ENCODE measurements at regions of chr12 and their contacts with region 1.

Region 1: DNA sequence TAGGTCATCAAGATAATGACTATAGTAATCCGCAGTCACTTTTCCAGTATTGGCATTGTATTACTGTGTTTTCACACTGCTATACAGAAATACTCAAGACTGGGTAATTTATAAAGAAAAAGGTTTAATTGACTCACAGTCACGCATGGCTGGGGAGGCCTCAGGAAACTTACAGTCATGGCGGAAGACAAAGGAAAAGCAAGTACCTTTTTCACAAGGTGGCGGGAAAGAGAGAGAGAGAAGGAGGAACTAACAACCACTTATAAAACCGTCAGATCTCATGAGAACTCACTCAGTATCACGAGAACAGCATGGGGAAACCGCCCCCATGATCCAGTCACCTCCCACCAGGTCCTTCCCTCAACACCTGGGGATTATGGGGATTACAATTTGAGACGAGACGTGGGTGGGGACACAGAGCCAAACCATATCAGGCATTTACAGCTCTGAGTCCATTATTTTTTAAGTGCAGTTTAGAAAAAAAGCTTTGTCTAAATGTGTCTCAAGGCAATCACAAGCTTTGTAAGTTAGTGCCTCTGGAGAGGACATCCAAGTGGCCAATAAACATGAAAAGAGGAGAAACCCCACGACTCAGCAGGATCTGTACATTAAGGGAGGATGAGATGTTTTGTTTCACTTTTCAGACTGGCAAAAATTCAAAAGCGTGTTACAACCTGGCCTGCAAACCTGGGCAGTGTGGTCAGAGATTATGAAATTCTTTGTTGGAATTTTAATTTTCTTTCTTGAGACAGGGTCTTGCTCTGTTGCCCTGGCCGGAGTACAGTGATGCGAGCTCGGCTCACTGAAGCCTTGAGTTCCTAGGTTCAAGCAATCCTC is 82.0 kb downstream of the DNAH10 start:
- DNase-seq: no peak
- ATAC-seq: no peak
- H3K4me3 Mint-ChIP-seq: no peak overlapping the region
- H3K27ac Mint-ChIP-seq: no peak overlapping the region
- H3K4me1 Mint-ChIP-seq: no peaks in the 10 kb centered on the region
- H3K27me3 Mint-ChIP-seq: peaks cover 2% of the 10 kb centered on the region

Region 2: DNA sequence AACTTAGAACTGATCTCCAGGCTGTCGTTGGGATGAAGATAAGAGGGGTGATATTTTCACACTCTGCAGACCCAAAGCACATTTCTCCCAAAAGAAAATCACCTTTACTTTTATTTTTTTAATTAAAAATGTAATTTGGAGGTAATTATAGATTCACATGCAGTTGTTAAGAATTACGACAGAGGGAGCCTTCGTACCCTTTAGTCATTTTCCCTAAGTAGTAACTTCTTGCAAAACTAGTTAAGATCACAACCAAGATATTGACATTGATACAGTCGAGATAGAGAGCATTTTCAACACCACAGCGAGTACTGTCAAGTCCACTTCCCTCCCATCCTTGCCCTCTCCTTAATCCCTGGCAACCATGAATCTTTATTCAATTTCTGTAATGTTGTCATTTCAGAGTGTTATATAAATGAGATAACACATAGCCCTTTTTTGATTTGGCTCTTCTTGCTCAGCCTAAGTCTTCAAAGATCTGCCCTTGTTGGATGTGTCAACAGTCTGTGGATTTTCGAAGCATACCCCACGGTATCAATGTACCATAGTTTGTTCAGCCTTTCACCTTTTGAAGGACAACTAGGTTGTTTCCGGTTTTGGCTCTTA is 42.5 kb before region 1 on chr12:
- CTCF ChIA-PET with region 1: interaction called, 5 read pairs
- POLR2A ChIA-PET with region 1: interaction called, 3 read pairs
- intact Hi-C with region 1: loop called (anchors 1 kb)
- DNase-seq: no peak
- ATAC-seq: no peak
- H3K4me3 Mint-ChIP-seq: no peak overlapping the region
- H3K27ac Mint-ChIP-seq: no peak overlapping the region
- H3K4me1 Mint-ChIP-seq: no peaks in the 10 kb centered on the region
- H3K27me3 Mint-ChIP-seq: no peaks in the 10 kb centered on the region

Measured in activated CD4-positive, alpha-beta T cell treated with anti-CD3 and anti-CD28 coated beads for 36 hours (primary cell).